Left cardiac atrium (tissue), 4 donors: ENCODE measurements at regions of chr9 and their contacts with region 1.

Region 1: DNA sequence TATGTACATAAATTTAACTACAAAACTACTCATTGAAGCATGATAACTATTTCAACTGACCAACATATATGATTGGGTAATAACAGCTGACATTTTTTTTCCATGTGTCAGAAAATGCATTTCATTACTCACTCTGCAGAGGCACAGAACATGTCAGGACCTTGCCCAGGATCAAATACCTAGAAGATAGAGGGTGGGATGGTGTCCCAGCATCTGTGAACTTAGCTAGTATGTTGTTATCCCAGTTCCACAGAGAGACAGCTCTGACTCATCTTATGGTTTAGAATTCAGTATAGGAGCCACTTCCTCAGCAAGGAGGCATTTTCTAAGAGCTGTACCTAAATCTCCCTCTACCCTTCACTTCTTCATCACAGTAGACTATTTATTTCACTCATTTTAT is 1198.6 kb upstream of the ACO1 start:
- DNase-seq: no peak
- ATAC-seq: no peak

Region 2: GRCh38 chr9:30967484-30967883 is 218.3 kb before region 1 on chr9:
- intact Hi-C with region 1: no loop called
- DNase-seq: no peak
- ATAC-seq: no peak

Region 3: DNA sequence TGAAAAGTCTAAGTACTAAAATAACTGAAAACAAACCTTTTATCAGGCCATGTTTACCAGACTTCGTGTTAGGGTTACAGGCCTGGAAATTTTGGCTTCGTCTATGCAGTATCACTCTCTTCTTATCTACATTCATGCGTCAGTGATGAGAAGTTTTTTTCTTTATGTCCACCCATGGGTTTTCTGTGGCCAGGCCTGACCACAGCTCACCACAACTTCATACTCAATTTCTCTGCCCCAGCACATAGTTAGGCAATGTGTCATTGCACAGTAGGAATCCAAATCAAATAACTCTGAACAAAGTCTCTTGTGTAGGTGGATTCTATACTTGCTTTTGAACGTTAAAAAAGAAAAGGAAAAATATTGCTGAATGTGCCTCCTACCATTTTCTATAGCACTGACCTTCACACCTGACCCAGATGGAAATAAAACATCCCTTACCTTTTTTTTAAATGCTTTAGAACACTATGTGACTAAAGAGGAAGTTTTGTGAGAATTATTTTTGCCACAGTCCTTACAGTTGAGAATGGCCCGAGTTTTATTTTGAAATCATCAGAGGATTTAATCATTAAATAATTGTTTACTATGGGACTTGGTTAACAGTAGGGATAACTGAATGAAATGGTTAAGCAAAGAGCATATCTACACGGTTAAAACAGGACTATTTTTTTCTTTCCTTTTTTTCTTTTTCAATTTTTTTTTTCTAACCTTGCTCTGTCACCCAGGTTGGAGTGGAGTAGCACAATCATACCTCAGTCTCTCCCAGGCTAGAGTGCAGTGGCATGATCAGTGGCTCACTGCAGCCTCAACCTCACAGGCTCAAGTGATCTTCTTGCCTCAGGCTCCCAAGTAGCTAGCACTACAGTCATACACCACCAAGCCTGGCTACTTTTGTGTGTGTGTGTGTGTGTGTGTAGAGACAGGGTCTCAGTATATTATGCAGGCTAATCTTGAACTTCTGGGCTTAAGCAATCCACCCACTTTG is 48.4 kb before region 1 on chr9:
- intact Hi-C with region 1: loop called in 1 of 2 experiments (anchors 10 kb)
- DNase-seq: no peak
- ATAC-seq: peak; percentile 30 to 99